Right cardiac atrium (tissue), 5 donors: ENCODE measurements at regions of chr14 and their contacts with region 1.

Region 1: GRCh38 chr14:95561001-95561412 is 26.2 kb downstream of the GLRX5 start:
- DNase-seq: peak; percentile 75 to 93 (median 83)
- ATAC-seq: peak; percentile 76 to 87
- H3K4me3 ChIP-seq: no peak overlapping the region
- H3K27ac ChIP-seq: no peak overlapping the region
- H3K4me1 ChIP-seq: no peaks in the 10 kb centered on the region
- H3K27me3 ChIP-seq: no peaks in the 10 kb centered on the region

Region 2: GRCh38 chr14:95163132-95163531 is 397.9 kb before region 1 on chr14:
- intact Hi-C with region 1: no loop called
- DNase-seq: no peak
- ATAC-seq: no peak
- H3K4me3 ChIP-seq: no peak overlapping the region
- H3K27ac ChIP-seq: no peak overlapping the region
- H3K4me1 ChIP-seq: no peaks in the 10 kb centered on the region
- H3K27me3 ChIP-seq: no peaks in the 10 kb centered on the region

Region 3: DNA sequence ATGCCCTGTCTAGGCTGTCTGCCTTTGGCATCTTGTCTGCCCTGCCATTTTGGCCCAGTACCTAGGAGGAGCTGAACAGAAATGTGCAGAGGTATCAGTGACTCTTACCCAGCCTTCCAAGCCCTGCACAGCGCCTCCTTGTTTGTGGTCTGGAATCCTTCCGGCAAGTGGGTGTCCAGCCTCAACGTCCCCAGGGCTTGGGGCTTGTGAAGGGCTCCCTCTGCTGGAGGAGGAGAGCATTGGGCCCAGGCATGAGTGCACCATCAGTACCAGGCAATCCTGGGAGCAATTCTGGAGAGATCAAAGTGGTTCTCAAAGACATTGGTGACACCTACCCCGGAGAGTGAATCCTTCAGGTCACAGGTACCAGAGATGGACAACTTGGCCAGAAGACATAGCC is 122.8 kb after region 1 on chr14:
- intact Hi-C with region 1: no loop called
- DNase-seq: no peak
- ATAC-seq: peak in 1 of 2 donors; percentile 11
- H3K4me3 ChIP-seq: no peak overlapping the region
- H3K27ac ChIP-seq: no peak overlapping the region
- H3K4me1 ChIP-seq: no peaks in the 10 kb centered on the region
- H3K27me3 ChIP-seq: no peaks in the 10 kb centered on the region

Region 4: DNA sequence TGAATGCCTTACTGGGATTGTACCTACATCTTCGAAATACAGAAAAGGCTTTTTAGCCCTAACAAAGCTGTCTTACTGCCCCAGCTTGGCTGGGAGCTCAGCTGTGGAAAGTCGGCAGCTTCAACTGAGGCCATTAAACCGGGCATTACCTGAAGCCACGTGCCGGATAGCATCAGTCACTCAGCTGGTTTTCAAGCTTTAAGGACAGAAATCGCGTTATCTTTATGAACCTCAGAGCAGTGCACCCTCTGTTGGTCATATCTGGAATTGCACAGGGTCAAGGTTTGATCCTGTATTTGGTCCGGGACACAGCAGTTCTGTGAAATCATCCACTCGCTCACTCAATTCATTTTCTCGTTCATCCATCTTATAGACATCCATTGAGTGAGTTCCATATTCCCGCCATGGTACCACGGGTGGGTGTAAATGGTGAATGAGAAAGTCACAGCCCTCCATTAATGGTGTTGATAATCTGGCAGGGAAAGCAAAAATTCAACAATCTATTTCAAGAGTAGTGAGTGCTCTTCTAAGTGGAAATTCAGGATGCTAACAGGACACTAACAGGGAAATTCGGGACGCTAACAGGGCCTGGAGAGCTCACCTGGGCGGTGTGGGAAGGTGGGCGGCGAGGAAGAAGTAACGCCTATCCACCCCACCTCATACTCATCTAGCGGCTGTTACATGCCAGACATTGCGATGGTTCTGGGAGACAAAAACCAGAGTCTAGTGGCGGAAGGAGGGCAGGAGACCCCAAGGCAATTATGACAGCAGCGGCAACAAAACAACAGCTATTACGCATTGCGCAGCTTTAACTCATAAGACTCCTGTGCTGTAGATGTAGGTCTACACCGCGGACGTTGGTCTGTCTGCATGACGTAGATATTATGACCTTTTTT is 213.5 kb after region 1 on chr14:
- intact Hi-C with region 1: loop called (anchors 5 to 10 kb)
- DNase-seq: no peak
- ATAC-seq: no peak
- H3K4me3 ChIP-seq: no peak overlapping the region
- H3K27ac ChIP-seq: no peak overlapping the region
- H3K4me1 ChIP-seq: no peaks in the 10 kb centered on the region
- H3K27me3 ChIP-seq: no peaks in the 10 kb centered on the region